Ascending aorta (tissue), 2 donors: ENCODE measurements at regions of chr16 and their contacts with region 1.

Region 1: DNA sequence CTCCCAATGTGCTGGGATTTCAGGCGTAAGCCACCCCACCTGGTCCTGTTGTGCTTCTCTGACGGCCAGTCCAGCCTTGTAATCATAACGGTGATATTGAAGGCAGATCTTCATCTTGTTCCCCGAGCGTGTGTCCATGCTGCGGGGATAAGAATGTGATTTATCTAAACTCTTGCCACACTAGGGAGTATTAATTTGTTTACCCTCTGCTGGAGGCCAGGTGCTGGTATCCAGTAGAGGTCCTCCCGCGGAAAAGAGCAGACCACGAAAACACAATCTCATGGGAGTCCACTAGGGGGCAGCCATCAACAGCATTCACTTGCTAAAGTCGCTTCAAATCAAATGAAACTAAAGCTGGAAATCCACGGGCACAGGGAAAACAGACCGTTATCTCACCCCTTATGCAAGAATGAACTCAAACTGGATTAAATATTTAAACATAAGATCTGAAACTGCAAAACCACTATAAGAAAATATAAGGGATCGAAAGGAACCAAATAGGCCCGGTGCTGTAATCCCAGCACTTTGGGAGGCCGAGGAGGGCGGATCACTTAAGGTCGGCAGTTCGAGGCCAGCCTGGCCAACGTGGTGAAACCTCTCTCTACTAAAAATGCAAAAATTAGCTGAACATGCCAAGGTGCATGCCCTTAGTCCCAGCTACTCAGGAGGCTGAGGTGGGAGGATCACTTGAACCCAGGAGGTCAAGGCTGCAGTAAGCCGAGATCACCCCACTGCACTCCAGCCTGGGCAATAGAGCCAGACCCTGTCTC is 22.3 kb upstream of the RBBP6 start:
- DNase-seq: peak; percentile 23 to 90
- H3K4me3 ChIP-seq: peak overlapping the region; percentile 38 to 51
- H3K27ac ChIP-seq: no peak overlapping the region
- H3K4me1 ChIP-seq: peaks cover 0 to 4% of the 10 kb centered on the region in 2 donors
- H3K27me3 ChIP-seq: no peaks in the 10 kb centered on the region
- CTCF ChIP-seq: peak; percentile 59 to 90 (median 87)

Region 2: DNA sequence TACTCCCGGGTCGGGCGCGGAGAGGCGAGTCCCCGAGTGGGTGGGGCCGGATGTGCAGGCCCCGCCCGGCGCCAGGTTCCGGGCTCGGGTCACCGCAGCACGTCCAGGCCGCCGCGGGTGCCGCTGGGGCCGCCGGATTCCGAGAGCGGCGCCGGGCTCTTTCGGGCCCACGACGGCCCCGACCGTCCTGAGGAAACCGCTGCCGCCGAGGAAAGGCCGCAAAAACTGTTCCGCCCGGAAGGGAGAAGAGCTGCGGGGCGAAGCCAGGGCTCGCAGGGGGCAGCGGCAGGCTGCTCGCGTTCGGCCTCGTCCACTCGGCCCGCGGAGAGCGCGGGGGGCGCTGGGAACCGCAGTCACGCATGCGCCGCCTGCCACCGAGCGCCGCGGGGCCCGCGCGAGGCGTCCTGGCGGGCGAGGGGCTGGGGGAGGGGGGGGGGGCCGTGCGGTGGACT is 740.4 kb after region 1 on chr16 and contains the start of gene ZKSCAN2:
- intact Hi-C with region 1: loop called (anchors 10 kb)
- DNase-seq: peak; percentile 63 to 93
- H3K4me3 ChIP-seq: peak within 1 kb of the TSS; percentile 70 to 92
- H3K27ac ChIP-seq: peak within 1 kb of the TSS; percentile 91 to 98
- H3K4me1 ChIP-seq: peaks cover 7 to 20% of the 10 kb centered on the region in 2 donors
- H3K27me3 ChIP-seq: no peaks in the 10 kb centered on the region
- CTCF ChIP-seq: no peak
- total RNA-seq, gene ZKSCAN2: 3.1 TPM